ENCODE measurements at regions of chr17 and their contacts with region 1.

Region 1: DNA sequence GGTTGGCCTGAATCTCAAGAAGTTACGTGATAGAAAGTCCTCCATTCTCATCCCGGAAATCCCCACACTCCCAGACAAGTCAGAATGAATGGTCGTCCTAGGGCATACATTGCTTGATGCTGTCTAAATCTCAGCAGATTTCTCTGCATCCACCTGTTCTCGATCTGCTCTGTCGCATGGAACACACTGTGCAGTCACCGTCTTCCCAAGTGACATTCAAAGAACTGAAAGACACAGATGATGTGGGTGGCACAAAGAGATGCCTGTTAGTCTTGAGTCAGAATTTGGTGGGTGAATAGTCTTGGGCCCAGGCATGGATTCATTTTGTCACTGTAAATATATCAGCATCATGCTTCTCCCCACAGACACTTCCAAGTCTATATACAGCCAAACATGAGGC is 518 bp upstream of the KRTAP9-3 start:
- DNase-seq: no peak
- ATAC-seq: no peak
- H3K4me3 ChIP-seq: no peak overlapping the region
- H3K27ac ChIP-seq: no peak overlapping the region
- H3K4me1 ChIP-seq: no peaks in the 10 kb centered on the region
- H3K27me3 ChIP-seq: peaks cover 0 to 43% (median 26%) of the 10 kb centered on the region in 7 donors
- CTCF ChIP-seq: no peak

Region 2: DNA sequence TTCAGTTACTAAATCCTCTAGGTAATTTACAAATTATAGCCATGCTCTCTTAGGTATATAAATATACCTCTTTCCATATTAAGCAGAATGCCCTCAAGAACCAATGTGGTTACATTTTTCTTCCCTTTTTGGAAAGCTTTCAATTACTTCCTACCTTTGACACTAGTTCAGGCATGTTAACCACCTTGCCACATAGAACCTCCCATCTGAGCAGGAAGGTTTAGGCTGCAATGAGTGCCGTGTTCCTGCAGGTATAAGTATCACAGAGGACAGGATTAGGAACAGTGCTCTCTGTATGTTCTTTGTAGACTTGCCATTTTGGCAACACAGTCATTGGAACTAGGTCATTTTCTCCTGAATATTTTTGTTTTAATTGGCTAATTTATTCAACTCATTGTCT is 496.7 kb before region 1 on chr17:
- intact Hi-C with region 1: no loop called
- DNase-seq: no peak
- ATAC-seq: no peak
- H3K4me3 ChIP-seq: no peak overlapping the region
- H3K27ac ChIP-seq: no peak overlapping the region
- H3K4me1 ChIP-seq: no peaks in the 10 kb centered on the region
- H3K27me3 ChIP-seq: peaks cover 0 to 30% (median 6%) of the 10 kb centered on the region in 7 donors
- CTCF ChIP-seq: no peak

Region 3: DNA sequence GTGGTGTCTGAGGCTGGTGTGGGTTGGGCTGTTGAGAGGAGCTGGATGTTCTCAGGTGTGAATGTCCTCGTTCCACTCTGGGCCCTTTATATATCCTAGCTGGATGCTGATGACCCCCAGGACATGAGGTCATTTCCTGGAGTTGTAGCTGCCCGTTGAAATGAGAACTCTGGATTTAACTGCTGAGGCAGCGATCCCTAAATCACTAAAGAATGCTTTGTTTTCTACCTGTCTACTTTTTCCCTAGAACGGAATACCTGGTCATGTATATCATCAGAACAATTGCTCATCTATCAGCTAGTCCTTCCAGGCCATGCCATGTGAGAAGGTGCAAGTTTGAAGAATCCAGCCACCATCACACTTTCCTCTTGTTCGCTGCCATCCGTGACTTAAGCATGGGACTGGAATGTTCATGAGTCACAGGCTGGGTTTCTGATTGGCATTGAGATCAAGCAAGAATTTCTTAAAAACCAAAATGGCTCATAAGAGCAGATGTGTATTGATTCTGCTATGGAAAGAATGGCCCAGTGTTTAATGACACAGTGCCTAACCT is 171.6 kb before region 1 on chr17 and contains the start of gene KRTAP2-3:
- intact Hi-C with region 1: no loop called
- DNase-seq: no peak
- ATAC-seq: no peak
- H3K4me3 ChIP-seq: no peak within 1 kb of the TSS
- H3K27ac ChIP-seq: no peak within 1 kb of the TSS
- H3K4me1 ChIP-seq: no peaks in the 10 kb centered on the region
- H3K27me3 ChIP-seq: peaks cover 0 to 82% (median 58%) of the 10 kb centered on the region in 7 donors
- CTCF ChIP-seq: no peak
- total RNA-seq, gene KRTAP2-3: not detected

Region 4: DNA sequence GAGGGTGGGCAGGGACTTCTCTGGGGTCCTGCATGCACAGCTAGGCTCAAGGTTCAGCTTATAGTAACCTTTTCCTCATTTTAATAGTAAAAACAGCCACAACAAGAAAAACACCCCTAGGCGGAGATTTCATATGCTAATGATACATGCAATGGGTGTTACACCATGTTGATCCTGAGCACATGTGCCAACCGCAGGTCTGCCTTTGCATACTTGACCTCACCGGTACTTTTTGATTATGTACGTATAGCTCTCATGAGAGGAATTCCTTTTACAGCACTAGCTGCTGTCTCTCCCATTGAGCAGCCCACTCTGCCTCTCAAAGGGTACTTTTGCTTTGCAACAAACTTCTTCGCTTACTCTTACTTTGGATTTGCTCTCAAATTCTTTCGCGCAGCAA is 135.7 kb before region 1 on chr17:
- intact Hi-C with region 1: no loop called
- DNase-seq: no peak
- ATAC-seq: no peak
- H3K4me3 ChIP-seq: no peak overlapping the region
- H3K27ac ChIP-seq: no peak overlapping the region
- H3K4me1 ChIP-seq: no peaks in the 10 kb centered on the region
- H3K27me3 ChIP-seq: peaks cover 0 to 32% (median 12%) of the 10 kb centered on the region in 7 donors
- CTCF ChIP-seq: no peak

Region 5: DNA sequence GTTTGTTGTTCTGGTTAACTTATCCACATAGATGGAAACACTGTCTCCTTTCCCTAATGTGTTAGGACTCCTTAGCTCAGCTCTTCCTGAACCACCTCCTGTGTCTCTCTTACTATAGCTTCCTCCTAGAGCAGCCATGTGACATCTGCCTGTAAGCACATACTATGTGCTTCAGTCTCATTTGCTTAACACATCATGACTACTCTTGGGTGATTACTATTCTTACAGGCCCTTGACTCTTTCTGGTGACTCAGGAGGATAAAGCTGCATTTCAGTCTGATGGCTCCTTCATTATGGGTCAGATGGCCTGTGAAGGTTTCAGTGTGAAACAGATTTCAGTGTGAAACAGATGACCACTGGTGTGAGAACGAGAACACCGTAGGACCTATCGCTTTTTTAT is 53.4 kb before region 1 on chr17:
- intact Hi-C with region 1: loop called in 1 of 10 experiments (anchors 10 kb)
- DNase-seq: no peak
- ATAC-seq: peak in 1 of 8 donors; percentile 20
- H3K4me3 ChIP-seq: no peak overlapping the region
- H3K27ac ChIP-seq: no peak overlapping the region
- H3K4me1 ChIP-seq: no peaks in the 10 kb centered on the region
- H3K27me3 ChIP-seq: peaks cover 0 to 20% (median 12%) of the 10 kb centered on the region in 7 donors
- CTCF ChIP-seq: no peak

Measured in heart right ventricle (tissue), 16 donors.